GM18951 (cell line): ENCODE measurements at regions of chr17 and their contacts with region 1.

Region 1: GRCh38 chr17:69567130-69567529 is 152.6 kb downstream of the MAP2K6 start:
- POLR2A ChIP-seq: no peak

Region 2: GRCh38 chr17:69144331-69145255 is 422.5 kb before region 1 on chr17:
- in situ Hi-C with region 1: no loop called
- POLR2A ChIP-seq: no peak

Region 3: GRCh38 chr17:70144260-70144846 is 577.2 kb after region 1 on chr17:
- in situ Hi-C with region 1: loop called (anchors 10 kb)
- POLR2A ChIP-seq: no peak